ENCODE measurements at regions of chr6 and their contacts with region 1.

Region 1: DNA sequence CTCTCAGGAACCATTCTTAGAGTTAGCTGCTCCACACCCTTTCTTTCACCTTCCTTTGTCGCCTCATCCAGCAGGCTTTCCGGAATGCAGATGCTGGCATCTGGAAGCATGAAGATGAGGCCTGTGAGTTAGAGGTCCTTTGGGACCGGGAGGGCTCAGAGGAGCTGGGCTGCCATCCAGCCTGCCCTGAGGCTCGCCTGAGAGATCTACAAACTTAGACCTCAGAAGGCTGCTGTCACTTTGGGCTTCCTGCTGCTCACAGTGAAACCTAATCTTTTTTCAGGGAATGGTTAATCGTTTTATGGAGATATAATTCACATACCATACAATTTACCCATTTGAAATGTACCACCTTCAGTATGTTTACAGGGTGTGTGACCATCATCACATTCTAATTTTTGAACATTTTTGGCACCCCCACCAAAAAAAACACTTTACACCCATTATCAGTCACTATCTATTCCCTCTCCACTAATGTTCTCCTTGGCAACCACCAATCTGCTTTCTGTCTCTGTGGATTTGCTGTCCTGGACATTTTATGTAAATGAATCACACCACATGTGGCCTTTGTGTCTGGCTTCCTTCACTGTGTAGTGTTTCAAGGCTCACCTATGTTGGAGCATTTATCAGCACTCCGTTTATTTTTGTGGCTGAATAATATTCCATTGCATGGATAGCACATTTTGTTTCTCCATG is 20.0 kb upstream of the MPC1 start:
- DNase-seq: no peak
- H3K4me3 ChIP-seq: no peak overlapping the region
- H3K27ac ChIP-seq: no peak overlapping the region
- H3K4me1 ChIP-seq: no peaks in the 10 kb centered on the region
- H3K27me3 ChIP-seq: peaks cover 0 to under 1% of the 10 kb centered on the region in 2 experiments
- CTCF ChIP-seq: no peak
- POLR2A ChIP-seq: no peak

Region 2: GRCh38 chr6:165884813-165885765 is 517.6 kb before region 1 on chr6:
- CTCF ChIA-PET with region 1: interaction called, 18 read pairs
- POLR2A ChIA-PET with region 1: no interaction called
- dilution Hi-C with region 1: no loop called
- intact Hi-C with region 1: no loop called
- DNase-seq: peak; percentile 59
- H3K4me3 ChIP-seq: no peak overlapping the region
- H3K27ac ChIP-seq: no peak overlapping the region
- H3K4me1 ChIP-seq: no peaks in the 10 kb centered on the region
- H3K27me3 ChIP-seq: no peaks in the 10 kb centered on the region
- CTCF ChIP-seq: peak; percentile 81 to 88
- POLR2A ChIP-seq: no peak

Region 3: GRCh38 chr6:166281104-166281503 is 121.6 kb before region 1 on chr6:
- CTCF ChIA-PET with region 1: interaction called, 125 read pairs
- POLR2A ChIA-PET with region 1: no interaction called
- dilution Hi-C with region 1: no loop called
- intact Hi-C with region 1: no loop called
- DNase-seq: no peak
- H3K4me3 ChIP-seq: no peak overlapping the region
- H3K27ac ChIP-seq: no peak overlapping the region
- H3K4me1 ChIP-seq: no peaks in the 10 kb centered on the region
- H3K27me3 ChIP-seq: peaks cover 0 to 2% of the 10 kb centered on the region in 2 experiments
- CTCF ChIP-seq: no peak
- POLR2A ChIP-seq: no peak

Region 4: GRCh38 chr6:166318649-166319600 is 83.8 kb before region 1 on chr6:
- CTCF ChIA-PET with region 1: interaction called, 158 read pairs
- POLR2A ChIA-PET with region 1: no interaction called
- dilution Hi-C with region 1: no loop called
- intact Hi-C with region 1: no loop called
- DNase-seq: no peak
- H3K4me3 ChIP-seq: no peak overlapping the region
- H3K27ac ChIP-seq: no peak overlapping the region
- H3K4me1 ChIP-seq: no peaks in the 10 kb centered on the region
- H3K27me3 ChIP-seq: no peaks in the 10 kb centered on the region
- CTCF ChIP-seq: no peak
- POLR2A ChIP-seq: no peak

Region 5: GRCh38 chr6:166956444-166957086 is 553.8 kb after region 1 on chr6 and contains the start of gene RNASET2:
- CTCF ChIA-PET with region 1: no interaction called
- POLR2A ChIA-PET with region 1: no interaction called
- dilution Hi-C with region 1: no loop called
- intact Hi-C with region 1: loop called (anchors 10 kb)
- DNase-seq: peak; percentile 91
- H3K4me3 ChIP-seq: peak within 1 kb of the TSS; percentile 60 to 63 (median 61)
- H3K27ac ChIP-seq: no peak within 1 kb of the TSS
- H3K4me1 ChIP-seq: peaks cover 21% of the 10 kb centered on the region
- H3K27me3 ChIP-seq: no peaks in the 10 kb centered on the region
- CTCF ChIP-seq: no peak
- POLR2A ChIP-seq: peak; percentile 20
- total RNA-seq, gene RNASET2: 10.0 and 10.7 TPM in 2 replicates